CD4-positive, alpha-beta T cell (primary cell): ENCODE measurements at regions of chr6 and their contacts with region 1.

Region 1: DNA sequence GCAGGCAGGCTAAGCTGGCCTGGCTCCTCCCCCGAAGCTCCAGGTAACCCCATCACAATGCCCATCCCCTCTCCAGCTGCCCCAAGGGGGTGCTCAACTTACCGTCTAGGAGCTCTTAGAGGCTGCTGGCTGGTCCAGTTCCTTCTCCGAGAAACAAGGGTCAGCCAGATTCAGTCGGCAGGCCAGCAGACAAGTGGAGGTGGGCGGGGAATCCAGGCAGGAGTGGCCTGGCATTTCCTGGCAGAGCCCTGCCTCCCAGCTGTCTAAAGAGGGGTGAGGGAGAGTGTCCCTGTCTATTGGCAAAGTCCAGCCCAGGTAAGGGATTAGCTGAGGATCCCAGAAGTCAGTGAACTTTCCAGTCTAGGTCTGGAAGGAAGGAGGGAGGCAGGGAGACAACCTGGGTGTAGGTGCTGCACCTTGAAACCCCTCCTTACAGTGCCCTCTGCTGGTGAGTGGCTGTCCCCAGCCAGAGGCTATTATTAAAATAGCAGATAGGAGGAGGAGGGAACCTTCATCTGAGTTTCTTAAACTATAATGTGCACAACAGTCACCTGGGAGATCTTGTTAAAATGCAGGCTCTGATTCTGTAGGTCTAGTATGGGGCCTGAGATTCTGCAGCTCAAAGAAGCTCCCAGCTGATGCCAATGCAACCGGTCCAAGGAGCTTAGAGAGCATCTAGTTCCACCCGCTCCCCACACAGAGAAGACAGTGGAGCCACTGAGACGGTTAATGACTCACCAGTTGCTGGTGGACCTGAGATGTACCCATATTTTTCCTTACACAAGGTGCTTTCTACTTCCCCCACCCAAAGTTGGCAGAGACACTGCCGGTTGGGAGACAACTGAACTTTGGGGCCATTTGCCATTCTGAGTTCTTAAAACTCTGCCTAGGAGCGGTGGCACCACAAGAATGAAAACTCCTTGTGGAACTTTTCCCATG is at the start of gene UNC5CL:
- DNase-seq: peak; percentile 30 to 70 (median 50)
- ATAC-seq: peak; percentile 74
- H3K4me3 ChIP-seq: no peak within 1 kb of the TSS
- H3K4me3 Mint-ChIP-seq: no peak within 1 kb of the TSS
- H3K27ac ChIP-seq: no peak within 1 kb of the TSS
- H3K27ac Mint-ChIP-seq: no peak within 1 kb of the TSS
- H3K4me1 ChIP-seq: no peaks in the 10 kb centered on the region
- H3K4me1 Mint-ChIP-seq: peaks cover 6% of the 10 kb centered on the region
- H3K27me3 ChIP-seq: no peaks in the 10 kb centered on the region
- H3K27me3 Mint-ChIP-seq: no peaks in the 10 kb centered on the region
- CTCF ChIP-seq: peak; percentile 71
- total RNA-seq, gene UNC5CL: 2.5 to 2.9 TPM

Region 2: DNA sequence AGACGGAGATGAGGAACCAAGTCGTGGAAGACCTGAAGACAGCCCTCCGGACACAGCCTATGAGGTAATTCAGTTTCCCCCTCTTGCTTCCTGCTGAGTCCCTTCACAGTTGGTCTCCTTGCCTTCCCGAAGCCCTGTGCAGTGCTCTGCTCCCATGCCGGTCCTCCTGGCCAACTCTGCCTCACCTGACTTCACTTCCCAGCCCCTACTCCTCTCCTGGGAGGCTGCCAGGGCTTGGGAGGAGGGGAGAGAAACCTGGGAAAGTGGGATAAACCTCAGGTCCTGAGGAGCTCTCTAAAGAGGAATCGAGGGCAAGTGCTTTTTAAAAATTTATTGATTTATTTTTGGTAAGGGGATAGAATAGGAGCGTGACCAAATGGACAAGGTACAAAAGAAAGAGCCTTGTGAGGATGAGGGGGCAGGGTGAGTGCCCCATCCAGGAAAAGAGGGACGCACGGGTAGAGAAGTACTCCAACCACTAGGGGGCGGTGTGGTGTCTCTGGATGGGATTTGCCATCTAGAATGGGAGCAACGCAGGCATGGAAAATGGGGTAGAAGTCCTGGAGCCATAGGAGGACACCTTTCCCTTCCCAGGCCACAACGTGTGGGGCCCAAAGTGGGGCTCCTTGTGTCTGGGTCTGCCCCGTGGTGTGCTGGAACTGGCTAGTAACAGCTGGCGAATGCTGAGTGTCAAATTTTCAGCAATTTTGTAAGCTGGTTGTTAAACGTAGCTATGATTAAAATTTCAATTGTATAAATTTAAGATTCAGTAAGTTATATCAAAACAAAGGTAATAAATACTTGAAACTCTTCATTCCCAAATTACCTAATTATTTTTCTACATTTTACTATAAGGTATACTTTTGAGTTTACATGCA is 1174.1 kb before region 1 on chr6:
- CTCF ChIA-PET with region 1: no interaction called
- POLR2A ChIA-PET with region 1: no interaction called
- intact Hi-C with region 1: loop called in 1 of 2 experiments (anchors 10 kb)
- DNase-seq: peak; percentile 19 to 65 (median 39)
- ATAC-seq: no peak
- H3K4me3 ChIP-seq: no peak overlapping the region
- H3K4me3 Mint-ChIP-seq: no peak overlapping the region
- H3K27ac ChIP-seq: no peak overlapping the region
- H3K27ac Mint-ChIP-seq: no peak overlapping the region
- H3K4me1 ChIP-seq: no peaks in the 10 kb centered on the region
- H3K4me1 Mint-ChIP-seq: no peaks in the 10 kb centered on the region
- H3K27me3 ChIP-seq: no peaks in the 10 kb centered on the region
- H3K27me3 Mint-ChIP-seq: peaks cover 13% of the 10 kb centered on the region
- CTCF ChIP-seq: peak; percentile 87

Region 3: GRCh38 chr6:40962241-40962640 is 77.1 kb before region 1 on chr6:
- CTCF ChIA-PET with region 1: no interaction called
- POLR2A ChIA-PET with region 1: no interaction called
- intact Hi-C with region 1: no loop called
- DNase-seq: peak in 2 of 14 experiments; percentile 15 to 17
- ATAC-seq: no peak
- H3K4me3 ChIP-seq: no peak overlapping the region
- H3K4me3 Mint-ChIP-seq: no peak overlapping the region
- H3K27ac ChIP-seq: no peak overlapping the region
- H3K27ac Mint-ChIP-seq: no peak overlapping the region
- H3K4me1 ChIP-seq: no peaks in the 10 kb centered on the region
- H3K4me1 Mint-ChIP-seq: no peaks in the 10 kb centered on the region
- H3K27me3 ChIP-seq: no peaks in the 10 kb centered on the region
- H3K27me3 Mint-ChIP-seq: no peaks in the 10 kb centered on the region
- CTCF ChIP-seq: no peak

Region 4: GRCh38 chr6:41239467-41240159 is 200.3 kb after region 1 on chr6:
- CTCF ChIA-PET with region 1: no interaction called
- POLR2A ChIA-PET with region 1: no interaction called
- intact Hi-C with region 1: no loop called
- DNase-seq: no peak
- ATAC-seq: no peak
- H3K4me3 ChIP-seq: no peak overlapping the region
- H3K4me3 Mint-ChIP-seq: no peak overlapping the region
- H3K27ac ChIP-seq: no peak overlapping the region
- H3K27ac Mint-ChIP-seq: no peak overlapping the region
- H3K4me1 ChIP-seq: no peaks in the 10 kb centered on the region
- H3K4me1 Mint-ChIP-seq: peaks cover 5% of the 10 kb centered on the region
- H3K27me3 ChIP-seq: peaks cover 5 to 7% of the 10 kb centered on the region in 2 experiments
- H3K27me3 Mint-ChIP-seq: peaks cover 18% of the 10 kb centered on the region
- CTCF ChIP-seq: no peak

Region 5: DNA sequence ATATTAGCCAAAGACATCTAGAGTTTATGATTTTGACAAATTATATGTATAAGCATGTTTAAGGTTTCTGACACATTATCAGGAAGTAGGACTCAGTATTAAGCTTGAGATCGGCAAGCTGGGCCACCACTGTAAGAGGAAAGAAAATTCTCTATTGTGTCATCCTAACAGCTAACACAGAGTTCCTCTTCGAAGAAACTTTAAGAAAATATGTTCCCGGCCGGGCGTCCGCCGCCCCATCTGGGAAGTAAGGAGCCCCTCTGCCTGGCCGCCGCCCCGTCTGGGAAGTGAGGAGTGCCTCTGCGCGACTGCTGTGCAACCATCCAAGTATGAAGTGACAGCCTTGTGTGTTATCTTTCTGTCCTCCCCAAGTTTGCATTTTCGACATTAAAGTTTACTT is 832.8 kb after region 1 on chr6:
- CTCF ChIA-PET with region 1: no interaction called
- POLR2A ChIA-PET with region 1: no interaction called
- intact Hi-C with region 1: no loop called
- DNase-seq: no peak
- ATAC-seq: no peak
- H3K4me3 ChIP-seq: no peak overlapping the region
- H3K4me3 Mint-ChIP-seq: no peak overlapping the region
- H3K27ac ChIP-seq: no peak overlapping the region
- H3K27ac Mint-ChIP-seq: no peak overlapping the region
- H3K4me1 ChIP-seq: no peaks in the 10 kb centered on the region
- H3K4me1 Mint-ChIP-seq: no peaks in the 10 kb centered on the region
- H3K27me3 ChIP-seq: no peaks in the 10 kb centered on the region
- H3K27me3 Mint-ChIP-seq: no peaks in the 10 kb centered on the region
- CTCF ChIP-seq: no peak